Activated CD4-positive, alpha-beta memory T cell treated with anti-CD3 and anti-CD28 coated beads for 36 hours (primary cell): ENCODE measurements at regions of chr1 and their contacts with region 1.

Region 1: GRCh38 chr1:214261206-214262123 is 19.5 kb upstream of the SMYD2 start:
- DNase-seq: peak; percentile 87
- H3K4me3 Mint-ChIP-seq: no peak overlapping the region
- H3K27ac Mint-ChIP-seq: no peak overlapping the region
- H3K4me1 Mint-ChIP-seq: peaks cover 13% of the 10 kb centered on the region
- H3K27me3 Mint-ChIP-seq: peaks cover 52% of the 10 kb centered on the region

Region 2: DNA sequence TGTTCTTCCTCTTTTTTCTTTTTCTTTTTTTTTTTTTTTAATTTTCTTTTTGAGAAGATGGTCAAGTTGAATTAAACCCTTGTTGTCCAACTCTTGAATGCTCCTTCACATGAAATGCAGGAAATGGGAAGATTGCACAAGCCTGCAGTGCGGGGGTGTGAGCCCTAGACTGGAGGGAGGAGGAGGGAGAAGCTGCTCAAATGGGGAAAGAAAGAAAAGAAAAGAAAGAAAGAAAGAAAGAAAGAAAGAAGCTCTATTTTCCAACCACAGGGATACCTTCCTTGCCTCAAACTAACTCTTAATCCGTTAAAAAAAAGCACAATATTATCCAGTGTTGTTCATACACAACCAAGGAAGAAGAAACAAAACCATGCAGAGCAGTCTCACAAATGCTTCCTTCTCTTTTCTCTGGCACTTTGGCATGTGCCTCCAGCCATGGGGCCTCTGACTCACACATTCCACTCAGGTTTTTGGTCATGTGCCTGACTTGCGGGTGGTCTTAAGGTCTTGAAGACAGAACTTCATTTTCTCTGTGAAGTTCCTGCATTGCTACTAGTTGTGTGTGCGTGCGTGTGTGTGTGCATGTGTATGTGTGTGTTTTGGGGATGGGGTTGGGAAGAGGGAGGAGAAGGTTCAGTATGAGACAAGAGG is 934.3 kb before region 1 on chr1:
- CTCF ChIA-PET with region 1: no interaction called
- POLR2A ChIA-PET with region 1: no interaction called
- intact Hi-C with region 1: no loop called
- DNase-seq: no peak
- H3K4me3 Mint-ChIP-seq: no peak overlapping the region
- H3K27ac Mint-ChIP-seq: no peak overlapping the region
- H3K4me1 Mint-ChIP-seq: no peaks in the 10 kb centered on the region
- H3K27me3 Mint-ChIP-seq: peaks cover 6% of the 10 kb centered on the region

Region 3: GRCh38 chr1:213512316-213512715 is 749.1 kb before region 1 on chr1:
- CTCF ChIA-PET with region 1: no interaction called
- POLR2A ChIA-PET with region 1: no interaction called
- intact Hi-C with region 1: no loop called
- DNase-seq: no peak
- H3K4me3 Mint-ChIP-seq: no peak overlapping the region
- H3K27ac Mint-ChIP-seq: no peak overlapping the region
- H3K4me1 Mint-ChIP-seq: no peaks in the 10 kb centered on the region
- H3K27me3 Mint-ChIP-seq: no peaks in the 10 kb centered on the region

Region 4: GRCh38 chr1:214251354-214251753 is 10.1 kb before region 1 on chr1:
- CTCF ChIA-PET with region 1: interaction called, 26 read pairs
- POLR2A ChIA-PET with region 1: no interaction called
- intact Hi-C with region 1: no loop called
- DNase-seq: no peak
- H3K4me3 Mint-ChIP-seq: no peak overlapping the region
- H3K27ac Mint-ChIP-seq: no peak overlapping the region
- H3K4me1 Mint-ChIP-seq: no peaks in the 10 kb centered on the region
- H3K27me3 Mint-ChIP-seq: peaks cover 18% of the 10 kb centered on the region

Region 5: DNA sequence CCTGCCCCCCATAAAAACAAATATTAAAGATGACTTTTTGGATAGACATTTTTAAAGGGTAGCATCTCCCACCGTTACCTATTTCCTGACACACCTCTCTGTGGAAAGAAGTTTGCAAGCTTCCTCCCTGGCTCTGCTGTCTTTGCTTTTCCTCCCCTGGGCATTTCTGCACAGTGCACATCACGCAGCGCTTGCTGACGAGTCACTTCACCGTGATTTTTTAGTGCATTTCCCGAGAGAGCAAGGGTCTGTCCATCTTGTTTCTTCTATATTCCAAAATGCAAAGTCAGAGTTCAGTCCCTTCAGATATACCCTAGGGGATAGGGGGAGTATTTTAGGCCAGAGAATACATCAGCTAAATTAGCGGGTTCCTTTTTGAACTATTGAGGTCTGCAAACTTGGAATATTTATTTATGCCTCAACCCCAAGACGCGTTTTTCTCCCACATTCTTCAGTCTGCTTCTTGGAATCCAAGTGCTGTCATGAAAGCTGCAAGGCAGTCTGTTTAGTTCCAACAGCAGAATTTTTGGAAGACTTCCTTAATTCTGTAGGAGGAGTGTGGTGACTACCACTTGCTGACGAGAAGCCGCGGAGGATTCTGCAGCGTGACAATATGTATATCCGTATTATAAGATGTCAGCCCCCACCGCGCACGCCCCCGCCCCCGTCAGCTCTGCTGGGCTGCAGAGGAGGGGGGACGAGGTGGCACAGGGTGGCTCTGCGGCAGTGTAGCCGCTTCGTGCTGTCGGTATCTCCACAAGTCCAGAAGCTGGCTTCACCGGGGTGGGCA is 41.9 kb after region 1 on chr1:
- CTCF ChIA-PET with region 1: interaction called, 18 read pairs
- POLR2A ChIA-PET with region 1: no interaction called
- intact Hi-C with region 1: no loop called
- DNase-seq: no peak
- H3K4me3 Mint-ChIP-seq: no peak overlapping the region
- H3K27ac Mint-ChIP-seq: no peak overlapping the region
- H3K4me1 Mint-ChIP-seq: peaks cover 14% of the 10 kb centered on the region
- H3K27me3 Mint-ChIP-seq: no peaks in the 10 kb centered on the region

Region 6: DNA sequence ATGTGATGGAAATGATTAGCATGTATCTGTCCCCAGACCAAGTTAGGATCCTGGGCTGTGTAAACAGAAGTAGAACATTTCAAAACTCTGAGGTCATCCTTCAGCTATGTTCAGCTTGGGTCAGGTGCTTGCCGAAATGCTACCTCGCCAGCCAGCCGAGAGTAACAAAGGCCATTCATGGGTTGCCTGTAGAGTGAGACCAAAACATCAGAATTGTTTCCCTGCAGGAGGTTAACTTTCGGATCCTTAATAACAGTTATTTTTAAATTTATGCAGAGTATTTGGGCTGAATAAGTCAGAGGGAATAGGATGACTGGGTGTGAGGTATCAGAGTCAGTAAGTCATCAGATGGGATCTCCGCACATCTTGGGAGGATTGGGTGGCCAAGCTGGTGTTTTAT is 55.1 kb after region 1 on chr1:
- CTCF ChIA-PET with region 1: interaction called, 20 read pairs
- POLR2A ChIA-PET with region 1: no interaction called
- intact Hi-C with region 1: no loop called
- DNase-seq: no peak
- H3K4me3 Mint-ChIP-seq: no peak overlapping the region
- H3K27ac Mint-ChIP-seq: no peak overlapping the region
- H3K4me1 Mint-ChIP-seq: peaks cover under 1% of the 10 kb centered on the region
- H3K27me3 Mint-ChIP-seq: no peaks in the 10 kb centered on the region

Region 7: GRCh38 chr1:214341932-214342331 is 80.5 kb after region 1 on chr1:
- CTCF ChIA-PET with region 1: interaction called, 10 read pairs
- POLR2A ChIA-PET with region 1: no interaction called
- intact Hi-C with region 1: no loop called
- DNase-seq: no peak
- H3K4me3 Mint-ChIP-seq: no peak overlapping the region
- H3K27ac Mint-ChIP-seq: no peak overlapping the region
- H3K4me1 Mint-ChIP-seq: no peaks in the 10 kb centered on the region
- H3K27me3 Mint-ChIP-seq: no peaks in the 10 kb centered on the region

Region 8: DNA sequence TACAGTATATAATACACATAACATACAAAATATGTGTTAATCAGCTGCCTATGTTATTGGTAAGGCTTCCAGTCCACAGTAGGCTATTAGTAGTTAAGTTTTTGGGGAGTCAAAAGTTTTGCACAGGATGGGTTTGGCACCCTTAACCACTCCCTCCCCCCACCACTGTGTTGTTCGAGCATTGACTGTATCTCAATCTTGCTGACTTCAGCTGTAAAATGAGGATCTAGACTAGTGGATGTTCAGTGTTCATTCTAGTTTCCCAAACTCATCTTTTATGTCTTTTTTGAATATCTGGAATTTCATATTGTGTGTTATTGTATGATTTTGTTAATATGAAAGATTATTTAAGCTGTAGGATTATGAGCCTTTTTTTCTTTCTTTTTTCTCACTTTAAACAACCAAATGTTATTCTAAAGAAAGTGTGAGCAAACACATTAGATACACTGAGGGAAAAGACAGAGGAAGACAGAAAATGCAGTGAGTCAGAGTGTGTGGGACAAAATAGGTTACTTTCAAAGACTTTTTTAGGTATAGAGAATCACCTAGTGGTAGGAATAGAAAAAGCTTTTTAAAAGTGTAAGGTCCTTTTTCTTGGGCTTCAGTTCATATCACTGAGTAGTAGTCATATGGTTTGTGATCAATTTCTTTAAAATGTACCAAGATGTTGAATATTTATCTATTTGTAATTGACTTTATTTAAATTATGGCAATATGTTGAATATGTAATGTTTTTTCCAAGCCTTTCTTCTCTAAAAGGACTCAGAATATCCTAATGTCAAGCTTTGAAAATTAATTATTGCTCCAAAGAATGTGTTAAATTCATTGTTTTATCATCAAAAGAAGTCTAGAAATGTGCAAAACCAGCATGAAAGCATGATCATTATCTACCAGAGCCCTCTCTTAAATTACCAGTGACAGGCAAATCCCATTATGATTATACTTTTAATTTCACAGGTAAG is 323.6 kb after region 1 on chr1:
- CTCF ChIA-PET with region 1: interaction called, 23 read pairs
- POLR2A ChIA-PET with region 1: no interaction called
- intact Hi-C with region 1: loop called (anchors 5 kb)
- DNase-seq: no peak
- H3K4me3 Mint-ChIP-seq: no peak overlapping the region
- H3K27ac Mint-ChIP-seq: no peak overlapping the region
- H3K4me1 Mint-ChIP-seq: no peaks in the 10 kb centered on the region
- H3K27me3 Mint-ChIP-seq: peaks cover 7% of the 10 kb centered on the region